ENCODE measurements at regions of chr12 and their contacts with region 1.

Region 1: GRCh38 chr12:121550974-121551634 is 29.7 kb downstream of the KDM2B start:
- DNase-seq: no peak
- ATAC-seq: no peak
- H3K4me3 ChIP-seq: no peak overlapping the region
- H3K4me3 Mint-ChIP-seq: no peak overlapping the region
- H3K27ac ChIP-seq: peak overlapping the region in 1 of 2 experiments; percentile 71
- H3K27ac Mint-ChIP-seq: peak overlapping the region; percentile 85
- H3K4me1 ChIP-seq: no peaks in the 10 kb centered on the region
- H3K4me1 Mint-ChIP-seq: peaks cover 6% of the 10 kb centered on the region
- H3K27me3 ChIP-seq: no peaks in the 10 kb centered on the region
- H3K27me3 Mint-ChIP-seq: no peaks in the 10 kb centered on the region
- CTCF ChIP-seq: no peak

Region 2: GRCh38 chr12:121144416-121144914 is 406.6 kb before region 1 on chr12:
- CTCF ChIA-PET with region 1: no interaction called
- POLR2A ChIA-PET with region 1: no interaction called
- intact Hi-C with region 1: no loop called
- DNase-seq: peak in 1 of 9 experiments; percentile 33
- ATAC-seq: no peak
- H3K4me3 ChIP-seq: no peak overlapping the region
- H3K4me3 Mint-ChIP-seq: no peak overlapping the region
- H3K27ac ChIP-seq: no peak overlapping the region
- H3K27ac Mint-ChIP-seq: no peak overlapping the region
- H3K4me1 ChIP-seq: peaks cover 4% of the 10 kb centered on the region
- H3K4me1 Mint-ChIP-seq: peaks cover 21% of the 10 kb centered on the region
- H3K27me3 ChIP-seq: no peaks in the 10 kb centered on the region
- H3K27me3 Mint-ChIP-seq: no peaks in the 10 kb centered on the region
- CTCF ChIP-seq: no peak

Region 3: GRCh38 chr12:121467115-121467793 is 83.8 kb before region 1 on chr12:
- CTCF ChIA-PET with region 1: no interaction called
- POLR2A ChIA-PET with region 1: no interaction called
- intact Hi-C with region 1: no loop called
- DNase-seq: peak; percentile 77 to 94 (median 86)
- ATAC-seq: peak; percentile 85
- H3K4me3 ChIP-seq: peak overlapping the region; percentile 49 to 55
- H3K4me3 Mint-ChIP-seq: peak overlapping the region; percentile 68
- H3K27ac ChIP-seq: peak overlapping the region; percentile 44 to 59
- H3K27ac Mint-ChIP-seq: no peak overlapping the region
- H3K4me1 ChIP-seq: peaks cover 26% of the 10 kb centered on the region
- H3K4me1 Mint-ChIP-seq: peaks cover 37% of the 10 kb centered on the region
- H3K27me3 ChIP-seq: no peaks in the 10 kb centered on the region
- H3K27me3 Mint-ChIP-seq: no peaks in the 10 kb centered on the region
- CTCF ChIP-seq: no peak

Region 4: GRCh38 chr12:121499929-121500793 is 50.9 kb before region 1 on chr12:
- CTCF ChIA-PET with region 1: interaction called, 18 read pairs
- POLR2A ChIA-PET with region 1: no interaction called
- intact Hi-C with region 1: loop called in 1 of 2 experiments (anchors 5 kb)
- DNase-seq: peak; percentile 55 to 88 (median 76)
- ATAC-seq: peak; percentile 80
- H3K4me3 ChIP-seq: no peak overlapping the region
- H3K4me3 Mint-ChIP-seq: no peak overlapping the region
- H3K27ac ChIP-seq: no peak overlapping the region
- H3K27ac Mint-ChIP-seq: no peak overlapping the region
- H3K4me1 ChIP-seq: peaks cover 13% of the 10 kb centered on the region
- H3K4me1 Mint-ChIP-seq: peaks cover 12% of the 10 kb centered on the region
- H3K27me3 ChIP-seq: no peaks in the 10 kb centered on the region
- H3K27me3 Mint-ChIP-seq: no peaks in the 10 kb centered on the region
- CTCF ChIP-seq: peak; percentile 97

Region 5: GRCh38 chr12:121565076-121565475 is 14.0 kb after region 1 on chr12:
- CTCF ChIA-PET with region 1: interaction called, 21 read pairs
- POLR2A ChIA-PET with region 1: no interaction called
- intact Hi-C with region 1: no loop called
- DNase-seq: no peak
- ATAC-seq: no peak
- H3K4me3 ChIP-seq: no peak overlapping the region
- H3K4me3 Mint-ChIP-seq: no peak overlapping the region
- H3K27ac ChIP-seq: no peak overlapping the region
- H3K27ac Mint-ChIP-seq: no peak overlapping the region
- H3K4me1 ChIP-seq: no peaks in the 10 kb centered on the region
- H3K4me1 Mint-ChIP-seq: peaks cover 16% of the 10 kb centered on the region
- H3K27me3 ChIP-seq: no peaks in the 10 kb centered on the region
- H3K27me3 Mint-ChIP-seq: no peaks in the 10 kb centered on the region
- CTCF ChIP-seq: no peak

Region 6: DNA sequence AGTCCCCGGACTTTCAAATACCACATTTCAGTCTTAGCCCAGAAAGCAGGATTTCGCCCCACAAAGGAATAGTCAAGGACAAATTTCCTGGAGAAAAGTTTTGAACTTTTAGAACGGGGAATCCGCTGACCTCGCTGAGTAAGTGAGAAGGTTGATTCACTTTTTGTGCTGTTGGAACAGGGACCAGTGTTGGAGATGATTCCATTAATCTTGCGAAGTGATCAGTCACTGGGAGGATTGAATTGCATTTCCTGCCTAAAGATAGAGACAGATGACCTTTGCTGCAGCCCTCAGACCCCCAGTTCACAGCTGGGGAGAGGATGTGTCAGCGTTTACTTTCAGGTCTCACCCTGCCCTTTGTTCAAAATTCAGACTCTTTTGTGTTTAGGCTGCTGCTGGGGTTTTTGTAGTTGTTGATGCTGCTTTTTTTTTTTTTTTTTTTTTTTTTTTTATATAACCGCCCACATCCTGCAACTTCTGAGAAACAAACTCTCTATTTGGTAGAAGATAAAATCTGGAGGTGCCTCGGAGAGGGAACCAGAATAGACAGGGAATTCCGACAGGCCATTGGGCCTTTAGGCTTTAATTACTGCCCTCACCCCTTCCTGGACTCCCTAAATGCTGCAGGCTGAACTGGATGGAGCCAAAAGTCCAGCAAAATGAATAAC is 39.5 kb after region 1 on chr12:
- CTCF ChIA-PET with region 1: interaction called, 14 read pairs
- POLR2A ChIA-PET with region 1: interaction called, 14 read pairs
- intact Hi-C with region 1: loop called in 1 of 2 experiments (anchors 5 kb)
- DNase-seq: peak in 8 of 9 experiments; percentile 37 to 92 (median 75)
- ATAC-seq: peak; percentile 75
- H3K4me3 ChIP-seq: peak overlapping the region; percentile 44 to 57
- H3K4me3 Mint-ChIP-seq: peak overlapping the region; percentile 89
- H3K27ac ChIP-seq: peak overlapping the region; percentile 95 to 96
- H3K27ac Mint-ChIP-seq: peak overlapping the region; percentile 100
- H3K4me1 ChIP-seq: peaks cover 30% of the 10 kb centered on the region
- H3K4me1 Mint-ChIP-seq: peaks cover 33% of the 10 kb centered on the region
- H3K27me3 ChIP-seq: no peaks in the 10 kb centered on the region
- H3K27me3 Mint-ChIP-seq: no peaks in the 10 kb centered on the region
- CTCF ChIP-seq: no peak

Region 7: GRCh38 chr12:121637231-121637914 is 86.3 kb after region 1 on chr12:
- CTCF ChIA-PET with region 1: interaction called, 14 read pairs
- POLR2A ChIA-PET with region 1: interaction called, 3 read pairs
- intact Hi-C with region 1: no loop called
- DNase-seq: peak in 8 of 9 experiments; percentile 47 to 83 (median 66)
- ATAC-seq: peak; percentile 77
- H3K4me3 ChIP-seq: peak overlapping the region; percentile 27 to 53
- H3K4me3 Mint-ChIP-seq: peak overlapping the region; percentile 62
- H3K27ac ChIP-seq: peak overlapping the region; percentile 62 to 71
- H3K27ac Mint-ChIP-seq: peak overlapping the region; percentile 84
- H3K4me1 ChIP-seq: peaks cover 53% of the 10 kb centered on the region
- H3K4me1 Mint-ChIP-seq: peaks cover 63% of the 10 kb centered on the region
- H3K27me3 ChIP-seq: no peaks in the 10 kb centered on the region
- H3K27me3 Mint-ChIP-seq: no peaks in the 10 kb centered on the region
- CTCF ChIP-seq: no peak

Region 8: GRCh38 chr12:121688966-121689365 is 137.9 kb after region 1 on chr12:
- CTCF ChIA-PET with region 1: interaction called, 53 read pairs
- POLR2A ChIA-PET with region 1: interaction called, 5 read pairs
- intact Hi-C with region 1: no loop called
- DNase-seq: no peak
- ATAC-seq: no peak
- H3K4me3 ChIP-seq: no peak overlapping the region
- H3K4me3 Mint-ChIP-seq: no peak overlapping the region
- H3K27ac ChIP-seq: no peak overlapping the region
- H3K27ac Mint-ChIP-seq: no peak overlapping the region
- H3K4me1 ChIP-seq: peaks cover 5% of the 10 kb centered on the region
- H3K4me1 Mint-ChIP-seq: peaks cover 8% of the 10 kb centered on the region
- H3K27me3 ChIP-seq: no peaks in the 10 kb centered on the region
- H3K27me3 Mint-ChIP-seq: no peaks in the 10 kb centered on the region
- CTCF ChIP-seq: no peak

Region 9: DNA sequence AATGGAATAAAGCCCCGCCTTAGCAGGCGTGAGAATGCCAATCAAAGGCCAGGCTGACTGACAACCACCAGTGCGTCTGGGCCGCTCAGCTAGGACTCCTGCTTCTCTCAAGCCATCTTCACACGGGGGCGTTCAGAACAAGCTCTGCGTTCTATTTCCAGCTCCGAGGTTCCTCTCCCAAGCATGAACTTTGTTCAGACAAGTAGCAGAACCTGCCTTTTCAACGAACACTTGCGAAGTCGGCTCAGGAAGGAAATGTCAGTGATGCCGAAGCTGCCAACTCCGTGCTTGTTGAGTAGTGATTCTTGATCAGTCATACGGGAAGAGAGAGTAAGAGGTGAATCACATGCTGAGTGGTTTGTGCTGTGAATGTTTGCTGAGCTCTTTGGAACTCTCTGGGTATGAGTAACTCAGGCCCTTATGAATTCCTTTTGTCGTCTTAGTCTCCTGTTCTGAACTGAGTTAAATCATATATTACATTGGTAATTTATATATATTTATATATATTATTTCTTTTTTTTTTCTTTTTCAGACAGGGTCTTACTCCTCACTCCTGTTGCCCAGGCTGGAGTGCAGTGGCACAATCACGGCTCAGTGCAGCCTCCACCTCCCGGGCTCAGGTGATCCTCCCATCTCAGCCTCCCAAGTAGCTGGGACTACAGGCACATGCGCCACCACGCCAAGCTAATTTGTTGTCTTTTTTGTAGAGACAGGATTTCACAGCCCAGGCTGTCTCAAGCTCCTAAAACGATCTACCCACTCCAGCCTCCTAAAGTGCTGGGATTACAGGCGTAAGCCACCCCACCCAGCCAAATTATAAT is 441.2 kb after region 1 on chr12:
- CTCF ChIA-PET with region 1: no interaction called
- POLR2A ChIA-PET with region 1: no interaction called
- intact Hi-C with region 1: no loop called
- DNase-seq: peak in 8 of 9 experiments; percentile 15 to 51 (median 30)
- ATAC-seq: peak; percentile 84
- H3K4me3 ChIP-seq: no peak overlapping the region
- H3K4me3 Mint-ChIP-seq: peak overlapping the region; percentile 45
- H3K27ac ChIP-seq: no peak overlapping the region
- H3K27ac Mint-ChIP-seq: no peak overlapping the region
- H3K4me1 ChIP-seq: no peaks in the 10 kb centered on the region
- H3K4me1 Mint-ChIP-seq: peaks cover 7% of the 10 kb centered on the region
- H3K27me3 ChIP-seq: no peaks in the 10 kb centered on the region
- H3K27me3 Mint-ChIP-seq: peaks cover 2% of the 10 kb centered on the region
- CTCF ChIP-seq: no peak